ENCODE measurements at regions of chrX and their contacts with region 1.

Region 1: GRCh38 chrX:2595258-2595657 is 94.5 kb upstream of the DHRSX start:
- DNase-seq: no peak
- ATAC-seq: no peak
- H3K4me3 ChIP-seq: no peak overlapping the region
- H3K27ac ChIP-seq: no peak overlapping the region
- H3K4me1 ChIP-seq: peaks cover 13% of the 10 kb centered on the region; the same call in 1 of the 2 replicates
- H3K27me3 ChIP-seq: no peaks in the 10 kb centered on the region
- CTCF ChIP-seq: no peak

Region 2: DNA sequence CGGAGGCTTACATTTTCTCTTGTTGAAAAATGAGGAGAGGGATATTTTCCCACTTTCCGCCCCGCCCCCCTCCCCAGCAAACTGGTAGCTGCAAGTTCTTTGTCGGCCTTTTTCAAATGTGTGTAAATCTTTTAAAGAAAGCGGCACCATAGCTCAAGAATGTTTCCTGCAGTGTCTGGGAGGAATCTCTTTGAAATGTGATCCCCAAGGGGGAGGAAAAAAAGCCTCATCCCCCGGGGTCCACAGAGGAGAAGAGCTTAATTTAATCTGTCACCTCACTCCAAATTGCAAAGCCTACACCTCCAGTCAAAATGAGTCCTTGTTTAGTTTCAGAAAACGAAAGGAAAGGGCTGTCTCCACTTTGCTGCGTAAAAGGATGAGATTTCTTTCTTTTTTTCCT is 945.6 kb before region 1 on chrX:
- CTCF ChIA-PET with region 1: no interaction called
- POLR2A ChIA-PET with region 1: no interaction called
- intact Hi-C with region 1: loop called (anchors 1 kb)
- DNase-seq: no peak
- ATAC-seq: no peak
- H3K4me3 ChIP-seq: no peak overlapping the region
- H3K27ac ChIP-seq: no peak overlapping the region
- H3K4me1 ChIP-seq: no peaks in the 10 kb centered on the region
- H3K27me3 ChIP-seq: no peaks in the 10 kb centered on the region
- CTCF ChIP-seq: no peak

Region 3: DNA sequence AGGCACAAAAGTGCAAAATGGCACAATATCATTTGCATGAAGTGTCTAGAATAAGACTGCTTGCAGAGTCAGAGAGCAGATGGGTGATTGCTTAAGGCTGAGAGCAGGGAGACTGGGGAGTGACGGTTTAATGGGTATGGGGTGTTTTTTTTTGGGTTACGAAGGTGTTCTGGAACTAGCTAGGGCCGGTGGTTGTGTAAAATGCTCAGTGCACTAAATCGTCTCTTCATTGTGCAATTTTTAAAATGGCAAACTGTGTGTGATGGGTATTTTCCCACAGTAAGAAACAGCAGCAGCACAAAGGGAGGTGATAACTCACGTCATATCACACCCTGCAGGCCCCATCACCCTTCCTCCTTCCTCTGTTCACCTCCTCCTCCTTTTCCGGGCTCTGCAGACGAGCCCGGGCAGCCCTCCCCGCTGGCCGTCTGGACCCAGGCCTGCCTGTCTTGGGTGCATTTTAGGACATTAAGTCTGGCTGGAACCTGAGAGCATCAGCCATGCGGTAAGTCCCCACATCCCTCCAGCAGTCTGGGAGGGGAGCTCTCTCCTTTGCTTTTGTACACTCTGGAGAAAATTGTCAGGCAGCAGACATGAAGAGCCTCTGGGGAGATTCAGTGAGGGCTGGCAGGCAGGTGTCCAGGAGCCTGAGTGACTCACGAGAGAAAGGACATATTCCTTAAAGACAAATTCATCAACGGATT is 937.7 kb before region 1 on chrX:
- CTCF ChIA-PET with region 1: no interaction called
- POLR2A ChIA-PET with region 1: no interaction called
- intact Hi-C with region 1: loop called (anchors 1 kb)
- DNase-seq: peak; percentile 25
- ATAC-seq: peak; percentile 33
- H3K4me3 ChIP-seq: no peak overlapping the region
- H3K27ac ChIP-seq: no peak overlapping the region
- H3K4me1 ChIP-seq: no peaks in the 10 kb centered on the region
- H3K27me3 ChIP-seq: no peaks in the 10 kb centered on the region
- CTCF ChIP-seq: no peak

Region 4: DNA sequence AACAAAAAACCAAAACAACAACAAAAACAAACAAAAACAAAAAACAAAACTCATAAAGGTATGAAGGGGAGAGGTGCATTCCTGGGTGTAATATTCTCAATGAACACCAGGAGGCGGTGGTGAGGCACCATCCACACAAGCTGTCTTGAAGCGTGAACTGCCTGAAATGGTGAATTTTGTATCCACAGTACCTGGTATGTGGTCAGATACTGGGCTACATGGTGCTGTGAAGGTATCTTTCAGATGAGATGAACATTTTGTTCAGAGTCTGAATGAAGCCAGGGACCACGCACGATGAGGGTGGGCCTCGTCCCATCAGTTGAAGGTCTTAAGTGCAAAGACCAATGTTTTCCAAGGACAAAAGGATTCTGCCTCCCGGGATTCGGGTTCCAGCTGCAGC is 921.9 kb before region 1 on chrX:
- CTCF ChIA-PET with region 1: no interaction called
- POLR2A ChIA-PET with region 1: no interaction called
- intact Hi-C with region 1: loop called (anchors 1 kb)
- DNase-seq: peak; percentile 54
- ATAC-seq: no peak
- H3K4me3 ChIP-seq: no peak overlapping the region
- H3K27ac ChIP-seq: no peak overlapping the region
- H3K4me1 ChIP-seq: no peaks in the 10 kb centered on the region
- H3K27me3 ChIP-seq: no peaks in the 10 kb centered on the region
- CTCF ChIP-seq: peak; percentile 77

Region 5: DNA sequence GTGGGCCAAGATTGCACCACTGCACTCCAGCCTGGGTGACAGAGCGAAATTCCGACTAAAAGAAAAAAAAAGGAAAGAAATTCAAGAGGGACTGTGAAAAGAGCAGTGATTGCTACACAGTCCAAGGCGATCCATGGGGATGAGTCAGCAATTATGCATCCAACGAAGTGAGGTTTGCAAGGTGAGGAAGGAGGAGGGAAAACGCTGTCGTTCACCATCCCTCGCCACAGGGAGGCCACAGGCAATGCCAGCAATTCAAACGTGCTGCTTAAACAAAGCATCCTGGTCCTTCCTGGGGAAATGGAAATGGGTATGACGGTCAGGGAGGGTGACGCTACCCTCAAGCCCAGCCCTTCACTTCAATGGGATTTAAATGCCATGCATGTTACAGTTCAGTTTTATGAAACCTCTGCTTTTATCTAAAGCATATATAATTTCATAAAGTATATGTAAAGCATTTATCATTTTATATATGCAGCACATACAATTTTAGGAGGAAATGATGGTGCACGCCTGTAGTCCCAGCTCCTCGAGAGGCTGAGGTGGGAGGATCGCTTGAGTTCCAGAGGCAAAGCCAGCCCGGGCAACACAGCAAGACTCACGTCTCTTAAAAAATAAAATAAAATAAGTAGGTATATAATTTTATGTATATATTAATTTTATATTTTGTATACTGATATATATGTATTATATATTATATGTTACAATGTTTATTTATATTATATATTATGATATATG is 203.2 kb before region 1 on chrX:
- CTCF ChIA-PET with region 1: no interaction called
- POLR2A ChIA-PET with region 1: no interaction called
- intact Hi-C with region 1: loop called (anchors 1 kb)
- DNase-seq: peak; percentile 93
- ATAC-seq: peak; percentile 96
- H3K4me3 ChIP-seq: no peak overlapping the region
- H3K27ac ChIP-seq: peak overlapping the region; percentile 36
- H3K4me1 ChIP-seq: peaks cover 7% of the 10 kb centered on the region; the same call in 1 of the 2 replicates
- H3K27me3 ChIP-seq: no peaks in the 10 kb centered on the region
- CTCF ChIP-seq: no peak; the same call in 1 of the 2 replicates

Measured in PC-3 (cell line).